ENCODE measurements at regions of chr1 and their contacts with region 1.

Region 1: GRCh38 chr1:153488731-153489130 is 28.3 kb upstream of the S100A7 start:
- DNase-seq: no peak
- H3K4me3 ChIP-seq: no peak overlapping the region
- H3K27ac ChIP-seq: peak overlapping the region in 2 of 4 donors; percentile 45 to 68
- H3K4me1 ChIP-seq: peaks cover 6 to 9% (median 7%) of the 10 kb centered on the region in 4 donors
- H3K27me3 ChIP-seq: no peaks in the 10 kb centered on the region
- CTCF ChIP-seq: no peak
- EP300 ChIP-seq: no peak
- POLR2A ChIP-seq: no peak

Region 2: DNA sequence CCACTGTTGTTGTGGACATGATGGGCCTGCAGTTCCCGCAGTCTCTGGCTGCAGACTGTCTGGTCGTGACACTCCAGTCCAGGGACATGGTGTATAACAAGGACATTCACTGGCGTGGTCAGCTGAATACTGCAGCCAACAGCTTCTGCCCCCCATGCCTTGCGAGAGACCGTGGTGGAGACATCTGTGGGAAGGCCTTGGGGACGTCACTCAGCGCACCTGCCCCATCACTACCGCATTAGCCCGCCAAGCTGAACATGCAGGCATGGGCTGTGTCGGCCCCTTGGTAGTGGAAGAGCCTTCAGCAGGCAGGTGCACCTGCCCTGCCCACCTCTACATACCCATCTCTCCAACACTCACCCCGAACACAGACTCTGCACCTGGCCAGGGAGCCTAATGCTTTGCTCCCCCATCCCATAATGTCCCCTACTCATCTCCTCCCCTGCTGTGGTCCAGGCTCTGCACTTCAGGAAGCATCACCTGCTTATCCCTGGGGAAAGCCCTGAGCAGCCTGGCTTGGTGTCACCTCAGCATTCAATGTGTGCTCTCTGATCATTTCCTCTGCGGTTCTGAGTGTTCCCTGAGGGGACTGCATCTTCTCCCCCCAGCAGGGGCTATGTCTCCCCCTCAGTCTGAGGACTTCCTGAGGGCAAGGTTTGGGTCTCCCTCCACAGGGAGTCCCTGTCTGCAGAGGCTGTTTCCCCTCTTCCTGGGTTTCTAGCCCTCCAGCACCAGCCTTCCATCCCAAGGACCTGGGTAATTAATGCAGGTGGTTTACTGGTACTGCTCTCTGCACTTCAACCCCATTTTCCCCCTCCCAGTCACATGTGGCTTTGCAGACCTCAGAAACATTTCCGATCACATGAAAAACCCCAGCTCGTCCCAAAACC is 143.3 kb before region 1 on chr1:
- in situ Hi-C with region 1: loop called in 3 of 4 experiments (anchors 5 kb)
- intact Hi-C with region 1: no loop called
- DNase-seq: no peak
- H3K4me3 ChIP-seq: no peak overlapping the region
- H3K27ac ChIP-seq: no peak overlapping the region
- H3K4me1 ChIP-seq: no peaks in the 10 kb centered on the region
- H3K27me3 ChIP-seq: peaks cover 14% of the 10 kb centered on the region
- CTCF ChIP-seq: no peak
- EP300 ChIP-seq: no peak
- POLR2A ChIP-seq: no peak

Measured in transverse colon (tissue), 4 donors.